ENCODE measurements at regions of chr11 and their contacts with region 1.

Region 1: DNA sequence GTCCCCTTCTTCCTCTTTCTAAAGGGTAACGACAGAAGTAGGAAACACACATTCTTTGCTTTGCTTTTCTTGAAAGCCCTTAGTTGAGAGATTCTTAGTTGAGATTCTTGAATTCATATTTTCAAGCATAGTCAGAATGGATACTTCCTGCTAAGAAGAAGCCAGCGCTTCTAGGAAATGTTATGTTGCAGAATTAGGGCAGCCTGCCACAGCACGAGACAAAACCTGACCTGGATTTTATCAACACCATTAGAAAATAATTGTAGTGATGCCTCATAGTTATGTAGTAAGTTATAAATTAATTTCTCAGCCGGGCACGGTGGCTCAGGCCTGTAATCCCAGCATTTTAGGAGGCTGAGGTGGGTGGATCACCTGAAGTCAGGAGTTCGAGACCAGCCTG is 37.9 kb upstream of the NUP160 start:
- DNase-seq: peak; percentile 43
- H3K4me3 Mint-ChIP-seq: no peak overlapping the region
- H3K27ac Mint-ChIP-seq: peak overlapping the region; percentile 83
- H3K4me1 Mint-ChIP-seq: peaks cover 53% of the 10 kb centered on the region
- H3K27me3 Mint-ChIP-seq: no peaks in the 10 kb centered on the region

Region 2: DNA sequence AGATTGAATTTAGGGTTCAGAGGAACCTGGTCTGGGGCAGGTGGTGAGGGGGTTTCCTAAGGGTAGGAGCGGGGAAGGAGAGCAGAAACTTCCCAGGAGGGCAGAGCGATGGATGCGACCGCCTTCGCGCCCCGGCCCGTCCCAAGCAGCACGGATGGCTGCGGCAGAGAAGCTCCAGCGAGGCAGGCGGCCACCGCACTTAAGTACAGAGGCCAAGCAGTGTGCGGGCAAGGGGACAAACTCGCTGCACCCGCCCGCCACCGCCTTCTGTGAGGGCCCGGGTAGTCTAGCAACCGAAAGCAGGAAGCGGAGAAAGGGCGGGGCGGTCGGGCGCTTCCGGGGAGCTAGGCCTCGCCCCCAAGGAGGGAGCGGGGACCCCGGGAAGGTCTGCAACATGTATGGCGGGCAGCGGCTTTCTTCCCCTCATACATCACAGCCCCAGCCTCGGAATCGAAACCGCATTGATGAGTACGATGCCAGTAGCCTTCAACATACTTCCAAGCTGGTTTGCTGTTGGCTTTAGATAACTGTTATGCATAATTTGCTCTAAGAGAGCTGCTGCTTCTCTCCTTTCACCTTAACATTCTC is 170.9 kb before region 1 on chr11 and contains the start of gene AGBL2:
- CTCF ChIA-PET with region 1: no interaction called
- POLR2A ChIA-PET with region 1: no interaction called
- intact Hi-C with region 1: no loop called
- DNase-seq: peak; percentile 91
- H3K4me3 Mint-ChIP-seq: peak within 1 kb of the TSS; percentile 86
- H3K27ac Mint-ChIP-seq: peak within 1 kb of the TSS; percentile 95
- H3K4me1 Mint-ChIP-seq: peaks cover 21% of the 10 kb centered on the region
- H3K27me3 Mint-ChIP-seq: no peaks in the 10 kb centered on the region
- total RNA-seq, gene AGBL2: 4.2 to 5.0 TPM

Region 3: DNA sequence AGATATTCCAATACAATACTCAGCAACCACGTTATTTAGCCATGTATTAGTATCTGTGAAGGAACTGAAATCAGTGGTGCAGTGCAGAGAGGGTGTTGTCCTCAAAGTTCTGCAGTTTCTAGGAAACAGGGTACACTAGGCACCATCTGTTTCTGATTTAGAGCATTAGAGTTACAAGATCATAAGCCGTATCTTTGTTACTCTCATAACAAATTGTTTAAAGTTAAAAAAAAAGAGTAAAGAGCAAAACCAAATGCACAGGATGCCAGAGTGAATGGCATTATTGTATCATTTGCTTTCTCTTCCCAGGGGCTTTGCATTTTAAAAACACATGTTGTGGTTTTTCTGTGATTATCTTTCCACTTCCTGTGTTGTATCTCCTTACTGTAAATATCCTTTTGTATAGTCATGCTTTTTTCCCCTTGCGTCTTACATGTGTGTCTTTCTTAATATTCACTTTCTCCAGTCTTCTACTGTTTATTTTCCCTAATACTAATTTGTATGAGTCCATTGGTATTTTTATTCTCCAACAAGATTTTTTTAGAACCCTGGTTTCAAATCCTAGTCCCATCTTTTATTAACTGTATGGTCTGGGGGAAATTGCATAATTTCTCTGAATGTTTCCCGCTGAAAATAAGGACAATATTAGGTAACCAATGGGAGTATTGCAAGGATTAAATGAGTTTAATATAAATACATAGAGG is 22.8 kb before region 1 on chr11:
- CTCF ChIA-PET with region 1: interaction called, 4 read pairs
- POLR2A ChIA-PET with region 1: interaction called, 3 read pairs
- intact Hi-C with region 1: loop called (anchors 1 kb)
- DNase-seq: no peak
- H3K4me3 Mint-ChIP-seq: no peak overlapping the region
- H3K27ac Mint-ChIP-seq: peak overlapping the region; percentile 71
- H3K4me1 Mint-ChIP-seq: peaks cover 37% of the 10 kb centered on the region
- H3K27me3 Mint-ChIP-seq: no peaks in the 10 kb centered on the region

Measured in activated CD4-positive, alpha-beta memory T cell treated with anti-CD3 and anti-CD28 coated beads for 36 hours (primary cell).